Left lung (tissue), 14 donors: ENCODE measurements at regions of chr5 and their contacts with region 1.

Region 1: DNA sequence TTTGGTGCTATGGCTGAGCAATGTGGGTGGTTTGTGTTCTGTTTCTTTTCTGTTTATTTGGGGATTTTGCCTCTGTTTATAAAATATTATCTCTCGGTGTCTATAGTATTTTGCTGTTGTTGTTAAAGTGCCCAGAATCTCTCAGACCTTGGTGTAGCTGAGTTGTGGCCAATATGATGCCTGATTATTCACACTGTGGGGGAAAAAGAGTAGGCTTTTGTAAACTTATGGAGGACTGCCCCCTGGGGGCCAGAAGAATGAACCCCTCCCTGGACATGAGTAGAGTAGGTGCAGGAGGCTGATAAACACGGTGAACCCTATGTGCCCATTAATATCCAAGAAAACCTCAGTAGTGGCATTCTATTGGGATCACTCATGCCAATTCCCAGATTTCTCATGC is 49.0 kb upstream of the DPYSL3 start:
- DNase-seq: peak in 3 of 4 donors; percentile 35 to 70 (median 52)
- ATAC-seq: peak; percentile 79
- H3K4me3 ChIP-seq: no peak overlapping the region
- H3K27ac ChIP-seq: no peak overlapping the region
- H3K4me1 ChIP-seq: peaks cover 3 to 11% of the 10 kb centered on the region in 2 donors
- H3K27me3 ChIP-seq: no peaks in the 10 kb centered on the region
- CTCF ChIP-seq: peak; percentile 51 to 59

Region 2: GRCh38 chr5:147453875-147454814 is 104.7 kb before region 1 on chr5:
- intact Hi-C with region 1: loop called in 1 of 2 experiments (anchors 10 kb)
- DNase-seq: peak; percentile 89 to 94 (median 92)
- ATAC-seq: peak; percentile 92
- H3K4me3 ChIP-seq: peak overlapping the region; percentile 63 to 67
- H3K27ac ChIP-seq: peak overlapping the region; percentile 80 to 90
- H3K4me1 ChIP-seq: peaks cover 14 to 25% of the 10 kb centered on the region in 2 donors
- H3K27me3 ChIP-seq: peaks cover 0 to 52% of the 10 kb centered on the region in 2 donors
- CTCF ChIP-seq: peak; percentile 87 to 94